Calu3 (cell line): ENCODE measurements at regions of chr6 and their contacts with region 1.

Region 1: DNA sequence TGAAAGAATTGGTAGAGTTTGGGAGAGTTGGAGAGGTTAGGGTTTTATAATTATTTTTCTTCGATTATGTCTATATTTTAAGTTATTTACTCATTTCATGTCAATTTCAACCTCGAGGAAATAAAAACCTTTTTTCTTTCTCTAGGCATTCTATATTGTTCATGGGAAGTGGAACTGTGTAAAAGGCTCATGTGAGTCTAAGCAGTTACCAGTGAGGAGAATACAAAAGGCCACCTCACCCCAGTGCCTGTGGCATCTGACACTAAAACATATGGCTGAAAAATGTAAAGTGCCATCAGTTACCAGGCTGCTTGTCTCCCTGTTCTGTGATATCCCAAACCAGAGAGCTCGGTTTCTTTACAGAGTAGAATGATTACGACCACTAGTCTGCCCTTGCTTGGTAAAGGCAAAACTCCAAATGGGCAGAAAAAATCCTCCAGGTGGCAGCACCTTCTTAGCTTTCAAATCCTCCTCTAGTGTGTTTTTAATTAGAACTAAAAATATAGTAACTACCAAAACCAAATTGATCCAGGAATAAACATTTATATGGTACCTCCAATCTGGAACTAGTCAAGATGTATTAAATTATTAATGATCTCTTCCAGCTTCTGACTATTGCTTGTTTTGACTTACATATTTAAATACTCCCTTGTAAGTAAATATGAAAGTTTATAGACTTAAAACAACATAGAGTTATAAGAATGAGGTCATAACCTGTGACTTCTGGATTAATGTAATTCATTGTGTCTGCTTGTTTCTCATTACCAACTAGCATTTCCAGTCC is 122.6 kb upstream of the MCHR2 start:
- DNase-seq: peak; percentile 55
- H3K4me3 Mint-ChIP-seq: no peak overlapping the region
- H3K27ac Mint-ChIP-seq: no peak overlapping the region
- H3K4me1 Mint-ChIP-seq: no peaks in the 10 kb centered on the region
- H3K27me3 Mint-ChIP-seq: no peaks in the 10 kb centered on the region
- CTCF ChIP-seq: peak; percentile 62

Region 2: DNA sequence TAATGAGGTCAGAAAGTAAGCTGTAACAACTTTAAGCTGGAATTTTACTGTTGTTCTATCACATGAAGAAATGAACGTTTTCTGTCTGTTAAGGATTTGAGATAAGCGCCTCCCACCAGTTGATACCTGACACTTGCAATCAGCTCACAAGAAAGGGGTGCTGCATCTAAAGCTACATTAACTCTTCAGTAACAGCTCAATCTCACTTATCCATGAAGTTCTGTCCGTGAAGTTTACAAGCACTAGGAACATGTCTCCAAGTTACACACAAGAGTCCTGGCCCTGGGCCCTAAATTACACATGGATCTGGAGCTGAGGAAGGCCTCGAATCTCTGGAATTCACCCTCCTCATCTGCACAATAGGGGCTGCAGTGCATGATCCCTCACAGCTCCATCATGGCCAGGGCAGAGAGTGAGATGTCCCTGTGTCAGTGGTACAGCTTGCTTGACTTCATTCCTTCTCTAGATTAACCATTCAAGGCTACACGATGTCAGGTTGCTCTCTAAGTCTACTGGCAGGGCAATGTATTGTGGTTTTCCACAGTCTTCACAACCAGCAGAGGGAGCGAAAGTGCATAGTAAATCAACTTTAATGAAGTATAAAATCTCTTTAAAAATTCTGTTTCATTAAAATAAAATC is 59.8 kb after region 1 on chr6:
- CTCF ChIA-PET with region 1: no interaction called
- intact Hi-C with region 1: loop called (anchors 2 kb)
- DNase-seq: peak; percentile 53
- H3K4me3 Mint-ChIP-seq: no peak overlapping the region
- H3K27ac Mint-ChIP-seq: peak overlapping the region; percentile 77
- H3K4me1 Mint-ChIP-seq: peaks cover 24% of the 10 kb centered on the region
- H3K27me3 Mint-ChIP-seq: no peaks in the 10 kb centered on the region
- CTCF ChIP-seq: peak; percentile 26

Region 3: GRCh38 chr6:100317031-100317430 is 200.4 kb after region 1 on chr6:
- CTCF ChIA-PET with region 1: no interaction called
- intact Hi-C with region 1: loop called (anchors 5 kb)
- DNase-seq: no peak
- H3K4me3 Mint-ChIP-seq: no peak overlapping the region
- H3K27ac Mint-ChIP-seq: no peak overlapping the region
- H3K4me1 Mint-ChIP-seq: peaks cover 28% of the 10 kb centered on the region
- H3K27me3 Mint-ChIP-seq: no peaks in the 10 kb centered on the region
- CTCF ChIP-seq: no peak

Region 4: DNA sequence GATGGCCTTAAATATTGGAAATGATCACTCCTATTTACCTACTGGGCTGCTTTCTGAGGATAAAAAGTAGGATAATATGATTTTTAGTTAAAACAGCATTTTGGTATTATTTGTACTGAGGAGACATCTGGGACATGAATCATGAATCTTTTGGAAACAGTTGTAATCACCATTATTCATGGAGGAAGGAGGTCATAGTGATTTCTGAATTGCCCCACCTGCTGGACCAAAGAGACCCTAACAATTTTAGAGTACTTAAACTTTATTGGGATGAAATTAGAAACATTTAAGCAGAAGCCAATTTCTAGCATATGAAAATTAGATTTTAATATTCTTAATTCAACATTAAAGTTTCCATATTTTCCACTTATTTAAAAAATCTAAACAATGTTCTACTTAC is 456.6 kb after region 1 on chr6:
- CTCF ChIA-PET with region 1: no interaction called
- intact Hi-C with region 1: loop called (anchors 5 kb)
- DNase-seq: peak; percentile 37
- H3K4me3 Mint-ChIP-seq: no peak overlapping the region
- H3K27ac Mint-ChIP-seq: no peak overlapping the region
- H3K4me1 Mint-ChIP-seq: no peaks in the 10 kb centered on the region
- H3K27me3 Mint-ChIP-seq: no peaks in the 10 kb centered on the region
- CTCF ChIP-seq: peak; percentile 48

Region 5: DNA sequence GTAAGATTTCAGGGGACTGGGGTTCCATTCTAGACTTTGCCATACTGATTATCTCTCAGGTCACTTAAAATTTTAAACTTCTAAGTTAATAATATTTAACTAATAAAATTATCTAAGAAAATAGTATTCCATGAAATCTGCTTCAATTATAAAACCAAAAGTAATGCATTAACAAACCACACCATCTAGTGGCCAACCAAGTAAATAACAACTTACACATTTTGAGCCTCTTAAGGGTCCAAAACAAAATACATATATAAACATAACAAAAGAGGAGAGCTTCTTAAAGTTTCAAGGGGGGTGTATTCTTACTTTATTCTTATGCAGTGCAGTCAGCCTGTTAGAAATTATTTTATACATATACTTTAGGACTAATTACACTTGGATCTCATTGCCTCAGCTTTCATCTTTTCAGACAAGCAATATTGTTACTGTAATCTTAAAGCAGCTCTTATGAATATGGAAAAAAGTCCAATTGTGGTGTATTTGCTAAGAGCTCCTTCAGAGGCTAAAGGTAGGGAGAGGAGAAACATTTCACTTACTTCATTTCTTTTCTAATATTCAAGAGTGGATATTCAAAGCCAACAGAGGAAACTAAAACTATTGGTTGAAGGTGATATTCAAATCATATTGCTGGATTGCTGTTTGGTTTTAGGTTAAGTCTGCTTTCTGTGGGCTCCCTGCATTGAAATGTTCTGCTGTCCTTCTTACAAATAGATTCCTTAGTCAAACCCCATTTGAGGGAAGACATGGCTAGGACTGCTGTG is 547.9 kb after region 1 on chr6:
- CTCF ChIA-PET with region 1: interaction called, 8 read pairs
- intact Hi-C with region 1: loop called (anchors 2 kb)
- DNase-seq: peak; percentile 11
- H3K4me3 Mint-ChIP-seq: no peak overlapping the region
- H3K27ac Mint-ChIP-seq: peak overlapping the region; percentile 94
- H3K4me1 Mint-ChIP-seq: peaks cover 34% of the 10 kb centered on the region
- H3K27me3 Mint-ChIP-seq: no peaks in the 10 kb centered on the region
- CTCF ChIP-seq: no peak